ENCODE measurements at regions of chr15 and their contacts with region 1.

Region 1: GRCh38 chr15:89888214-89888804 is 5.5 kb downstream of the AP3S2 start:
- DNase-seq: peak; percentile 67
- H3K4me3 ChIP-seq: no peak overlapping the region
- H3K27me3 ChIP-seq: no peaks in the 10 kb centered on the region
- CTCF ChIP-seq: peak; percentile 66

Region 2: GRCh38 chr15:89740137-89740536 is 148.2 kb before region 1 on chr15:
- CTCF ChIA-PET with region 1: interaction called, 62 read pairs
- POLR2A ChIA-PET with region 1: no interaction called
- DNase-seq: peak; percentile 14
- H3K4me3 ChIP-seq: no peak overlapping the region
- H3K27me3 ChIP-seq: peaks cover 5% of the 10 kb centered on the region
- CTCF ChIP-seq: peak; percentile 87

Region 3: GRCh38 chr15:89760303-89761008 is 127.9 kb before region 1 on chr15:
- CTCF ChIA-PET with region 1: interaction called, 120 read pairs
- POLR2A ChIA-PET with region 1: no interaction called
- DNase-seq: no peak
- H3K4me3 ChIP-seq: no peak overlapping the region
- H3K27me3 ChIP-seq: no peaks in the 10 kb centered on the region
- CTCF ChIP-seq: peak; percentile 98

Region 4: GRCh38 chr15:89776274-89777072 is 111.8 kb before region 1 on chr15 and contains the start of gene MESP2:
- CTCF ChIA-PET with region 1: interaction called, 19 read pairs
- POLR2A ChIA-PET with region 1: no interaction called
- DNase-seq: no peak
- H3K4me3 ChIP-seq: peak within 1 kb of the TSS; percentile 40
- H3K27me3 ChIP-seq: no peaks in the 10 kb centered on the region
- CTCF ChIP-seq: peak; percentile 45
- polyA plus RNA-seq, gene MESP2: 0.28 and 0.39 TPM in 2 replicates

Region 5: DNA sequence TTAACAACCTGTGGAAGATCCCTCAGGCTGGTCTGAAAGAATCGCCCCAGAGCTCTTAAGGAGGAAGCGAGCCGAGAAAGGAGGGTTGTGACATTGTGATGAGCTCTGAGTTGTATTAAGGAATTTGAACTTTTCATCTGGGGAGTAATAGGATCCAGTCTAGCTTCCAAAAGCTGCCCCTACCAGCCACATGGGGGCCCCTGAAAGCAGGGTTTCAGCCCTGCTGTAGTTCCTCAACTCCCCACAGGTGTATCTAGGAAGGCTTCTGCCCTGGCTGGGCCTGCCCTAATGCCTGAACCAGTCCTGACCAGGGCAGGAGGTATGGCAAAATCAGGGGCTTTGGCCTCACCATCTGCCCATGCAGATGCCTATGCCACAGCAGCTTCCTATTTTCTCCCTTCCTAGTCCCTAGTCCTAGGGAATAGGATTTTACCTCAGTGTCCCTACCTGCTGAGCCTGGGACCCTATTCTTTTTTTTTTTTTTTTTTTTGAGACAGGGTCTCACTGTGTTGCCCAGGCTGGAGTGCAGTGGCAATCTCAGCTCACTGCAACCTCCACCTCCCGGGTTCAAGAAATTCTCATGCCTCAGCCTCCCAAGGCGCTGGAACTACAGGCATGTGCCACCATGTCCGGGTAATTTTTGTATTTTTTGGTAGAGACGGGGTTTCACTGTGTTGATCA is 10.4 kb after region 1 on chr15:
- CTCF ChIA-PET with region 1: interaction called, 10 read pairs
- POLR2A ChIA-PET with region 1: no interaction called
- DNase-seq: no peak
- H3K4me3 ChIP-seq: no peak overlapping the region
- H3K27me3 ChIP-seq: no peaks in the 10 kb centered on the region
- CTCF ChIP-seq: peak; percentile 72

Measured in BJ (cell line).